CD14-positive monocyte (primary cell): ENCODE measurements at regions of chr1 and their contacts with region 1.

Region 1: GRCh38 chr1:115277276-115277675 is 60.8 kb downstream of the NGF start:
- DNase-seq: no peak
- H3K4me3 ChIP-seq: no peak overlapping the region
- H3K4me3 Mint-ChIP-seq: no peak overlapping the region
- H3K27ac ChIP-seq: no peak overlapping the region
- H3K27ac Mint-ChIP-seq: no peak overlapping the region
- H3K4me1 ChIP-seq: peaks cover 0 to 2% of the 10 kb centered on the region in 2 donors
- H3K4me1 Mint-ChIP-seq: no peaks in the 10 kb centered on the region
- H3K27me3 ChIP-seq: no peaks in the 10 kb centered on the region
- H3K27me3 Mint-ChIP-seq: peaks cover 0 to 5% (median 0%) of the 10 kb centered on the region in 3 donors
- CTCF ChIP-seq: no peak

Region 2: DNA sequence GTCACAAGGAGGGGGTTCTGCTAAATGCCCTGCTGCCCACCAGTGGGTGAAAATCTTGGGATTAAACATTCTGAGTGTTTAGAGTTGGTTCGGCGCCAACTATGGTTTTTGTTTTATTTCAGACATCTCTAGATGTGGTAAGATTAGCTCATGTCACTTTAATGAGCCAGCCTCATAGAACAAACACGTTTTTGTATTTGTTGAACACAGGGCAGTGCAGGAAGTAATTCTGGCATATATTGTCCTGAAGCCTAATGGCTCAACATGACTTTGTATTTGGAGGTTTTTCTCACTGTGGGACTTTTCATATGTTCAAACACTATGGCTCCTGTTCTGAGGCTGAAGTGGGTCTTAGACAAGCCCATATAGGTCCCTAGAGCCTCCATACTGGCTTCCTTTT is 47.0 kb before region 1 on chr1:
- intact Hi-C with region 1: loop called in 1 of 2 experiments (anchors 2 kb)
- DNase-seq: no peak
- H3K4me3 ChIP-seq: no peak overlapping the region
- H3K4me3 Mint-ChIP-seq: no peak overlapping the region
- H3K27ac ChIP-seq: no peak overlapping the region
- H3K27ac Mint-ChIP-seq: no peak overlapping the region
- H3K4me1 ChIP-seq: peaks cover 3 to 4% of the 10 kb centered on the region in 2 donors
- H3K4me1 Mint-ChIP-seq: no peaks in the 10 kb centered on the region
- H3K27me3 ChIP-seq: no peaks in the 10 kb centered on the region
- H3K27me3 Mint-ChIP-seq: peaks cover 0 to 3% (median 0%) of the 10 kb centered on the region in 3 donors
- CTCF ChIP-seq: no peak